Natural killer cell (primary cell): ENCODE measurements at regions of chr11 and their contacts with region 1.

Region 1: DNA sequence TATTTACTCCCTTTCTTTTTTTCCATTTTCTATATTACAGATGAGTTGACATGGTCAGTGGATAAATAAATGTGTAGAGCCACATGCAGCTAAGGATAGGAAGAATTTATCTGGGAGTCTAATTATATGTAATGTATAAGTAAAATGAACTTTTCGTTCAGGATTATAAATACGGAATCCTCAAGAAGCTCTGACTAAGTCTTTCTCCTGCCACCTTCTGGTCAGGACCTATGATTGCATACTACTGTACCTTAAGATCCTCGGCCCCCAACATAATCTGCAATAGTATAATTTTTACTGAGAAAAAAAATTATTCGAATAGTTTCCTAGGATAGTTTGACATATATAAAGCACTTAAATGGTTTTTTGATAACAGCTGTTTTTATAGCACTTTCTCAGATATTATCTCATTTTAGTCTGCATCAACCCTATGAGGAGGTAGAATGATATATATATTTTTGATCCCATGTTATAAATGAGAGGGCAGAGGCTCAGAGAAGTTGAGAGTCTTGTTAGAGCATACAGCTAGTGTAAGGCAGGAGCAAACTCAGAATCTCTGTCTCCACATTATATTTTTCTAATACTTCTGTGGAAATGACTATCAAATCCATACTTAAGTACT is 36.1 kb downstream of the CCDC90B start:
- DNase-seq: peak in 1 of 2 donors; percentile 73
- ATAC-seq: peak; percentile 64 to 91 (median 82)
- H3K4me3 ChIP-seq: no peak overlapping the region
- H3K4me3 Mint-ChIP-seq: no peak overlapping the region
- H3K27ac ChIP-seq: no peak overlapping the region
- H3K27ac Mint-ChIP-seq: no peak overlapping the region
- H3K4me1 ChIP-seq: no peaks in the 10 kb centered on the region
- H3K4me1 Mint-ChIP-seq: no peaks in the 10 kb centered on the region
- H3K27me3 ChIP-seq: no peaks in the 10 kb centered on the region
- H3K27me3 Mint-ChIP-seq: no peaks in the 10 kb centered on the region
- CTCF ChIP-seq: peak; percentile 85

Region 2: DNA sequence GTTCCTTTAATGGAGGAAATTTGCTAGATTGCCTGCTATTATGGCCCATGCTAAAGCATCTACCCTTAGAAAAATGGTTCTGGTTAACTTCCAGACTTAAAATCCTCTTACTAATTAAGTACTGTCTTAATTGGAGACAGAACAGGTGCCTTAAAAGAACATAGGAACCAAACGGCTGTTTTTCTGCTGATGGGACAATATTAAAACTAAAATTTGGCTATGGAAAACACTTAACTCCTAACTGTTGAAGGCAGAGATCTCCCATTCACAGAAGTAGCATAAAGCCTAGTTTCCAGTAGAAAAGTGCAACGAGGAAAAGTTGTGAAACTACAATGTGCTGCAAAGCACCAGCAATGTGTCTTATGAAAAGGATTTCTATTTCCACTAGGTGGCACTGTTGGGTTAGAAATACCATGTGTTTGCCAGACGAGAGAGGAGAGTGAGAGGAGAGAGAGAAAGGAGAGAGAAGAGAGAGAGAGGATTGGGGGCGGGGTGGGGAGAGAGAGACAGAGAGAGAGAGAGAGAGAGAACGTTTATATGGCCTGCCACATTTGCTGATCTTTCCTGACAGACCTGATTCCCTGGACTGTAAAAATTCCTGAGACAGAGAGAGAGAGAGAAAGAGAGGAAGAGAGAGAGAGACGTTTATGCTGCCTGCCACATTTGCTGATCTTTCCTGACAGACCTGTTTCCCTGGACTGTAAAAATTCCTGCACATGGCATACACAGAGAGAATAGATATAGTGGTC is 567.9 kb before region 1 on chr11:
- intact Hi-C with region 1: loop called (anchors 5 kb)
- DNase-seq: peak in 1 of 2 donors; percentile 70
- ATAC-seq: peak in 1 of 3 donors; percentile 66
- H3K4me3 ChIP-seq: no peak overlapping the region
- H3K4me3 Mint-ChIP-seq: peak overlapping the region; percentile 2
- H3K27ac ChIP-seq: no peak overlapping the region
- H3K27ac Mint-ChIP-seq: no peak overlapping the region
- H3K4me1 ChIP-seq: no peaks in the 10 kb centered on the region
- H3K4me1 Mint-ChIP-seq: peaks cover 0 to 6% of the 10 kb centered on the region in 2 donors
- H3K27me3 ChIP-seq: no peaks in the 10 kb centered on the region
- H3K27me3 Mint-ChIP-seq: peaks cover 0 to 9% of the 10 kb centered on the region in 2 donors
- CTCF ChIP-seq: peak; percentile 53

Region 3: GRCh38 chr11:82790723-82791484 is 459.2 kb before region 1 on chr11:
- intact Hi-C with region 1: no loop called
- DNase-seq: no peak
- ATAC-seq: no peak
- H3K4me3 ChIP-seq: no peak overlapping the region
- H3K4me3 Mint-ChIP-seq: no peak overlapping the region
- H3K27ac ChIP-seq: no peak overlapping the region
- H3K27ac Mint-ChIP-seq: no peak overlapping the region
- H3K4me1 ChIP-seq: no peaks in the 10 kb centered on the region
- H3K4me1 Mint-ChIP-seq: no peaks in the 10 kb centered on the region
- H3K27me3 ChIP-seq: no peaks in the 10 kb centered on the region
- H3K27me3 Mint-ChIP-seq: peaks cover 0 to 6% of the 10 kb centered on the region in 2 donors
- CTCF ChIP-seq: no peak

Region 4: GRCh38 chr11:82867495-82868082 is 382.5 kb before region 1 on chr11:
- intact Hi-C with region 1: loop called (anchors 1 kb)
- DNase-seq: peak; percentile 55 to 88
- ATAC-seq: peak; percentile 74 to 77 (median 76)
- H3K4me3 ChIP-seq: no peak overlapping the region
- H3K4me3 Mint-ChIP-seq: peak overlapping the region; percentile 18
- H3K27ac ChIP-seq: no peak overlapping the region
- H3K27ac Mint-ChIP-seq: no peak overlapping the region
- H3K4me1 ChIP-seq: peaks cover 3% of the 10 kb centered on the region
- H3K4me1 Mint-ChIP-seq: peaks cover 8 to 10% of the 10 kb centered on the region in 2 donors
- H3K27me3 ChIP-seq: no peaks in the 10 kb centered on the region
- H3K27me3 Mint-ChIP-seq: no peaks in the 10 kb centered on the region
- CTCF ChIP-seq: peak; percentile 80

Region 5: GRCh38 chr11:82906244-82906654 is 343.8 kb before region 1 on chr11:
- intact Hi-C with region 1: loop called (anchors 1 kb)
- DNase-seq: peak in 1 of 2 donors; percentile 57
- ATAC-seq: no peak
- H3K4me3 ChIP-seq: no peak overlapping the region
- H3K4me3 Mint-ChIP-seq: no peak overlapping the region
- H3K27ac ChIP-seq: no peak overlapping the region
- H3K27ac Mint-ChIP-seq: no peak overlapping the region
- H3K4me1 ChIP-seq: peaks cover 8% of the 10 kb centered on the region
- H3K4me1 Mint-ChIP-seq: peaks cover 15 to 16% of the 10 kb centered on the region in 2 donors
- H3K27me3 ChIP-seq: no peaks in the 10 kb centered on the region
- H3K27me3 Mint-ChIP-seq: no peaks in the 10 kb centered on the region
- CTCF ChIP-seq: peak; percentile 82

Region 6: DNA sequence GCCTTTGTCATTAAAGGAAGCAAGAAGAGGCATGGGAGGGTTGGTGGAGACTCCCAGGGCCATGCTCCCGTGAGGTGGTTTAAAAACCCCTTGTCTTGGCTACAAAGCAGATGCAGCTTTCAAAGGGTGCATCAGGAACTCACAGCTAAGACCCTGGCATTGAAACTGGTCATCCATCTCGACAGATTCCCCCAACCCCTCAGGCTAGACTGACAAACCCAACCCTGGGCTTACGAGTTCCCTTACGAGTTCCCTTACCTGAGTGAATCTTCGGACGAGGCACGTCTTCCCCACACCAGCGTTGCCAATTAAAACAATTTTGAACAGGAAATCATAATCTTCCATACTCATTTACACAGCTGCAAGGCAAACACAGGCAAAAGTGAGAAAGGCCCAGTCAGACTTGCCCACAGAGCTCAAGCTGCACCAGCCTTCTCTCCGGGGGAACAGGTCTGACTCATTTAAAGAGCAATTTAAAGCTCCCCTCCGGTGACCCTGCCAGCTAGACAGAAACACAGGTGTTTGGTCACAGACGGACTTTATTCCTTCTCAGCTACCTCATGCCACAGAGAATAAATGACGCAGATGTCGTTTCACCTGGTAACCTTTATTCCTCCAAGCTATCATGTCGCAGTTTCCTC is 253.0 kb before region 1 on chr11:
- intact Hi-C with region 1: no loop called
- DNase-seq: no peak
- ATAC-seq: no peak
- H3K4me3 ChIP-seq: no peak overlapping the region
- H3K4me3 Mint-ChIP-seq: no peak overlapping the region
- H3K27ac ChIP-seq: no peak overlapping the region
- H3K27ac Mint-ChIP-seq: no peak overlapping the region
- H3K4me1 ChIP-seq: no peaks in the 10 kb centered on the region
- H3K4me1 Mint-ChIP-seq: peaks cover 11 to 16% of the 10 kb centered on the region in 2 donors
- H3K27me3 ChIP-seq: no peaks in the 10 kb centered on the region
- H3K27me3 Mint-ChIP-seq: no peaks in the 10 kb centered on the region
- CTCF ChIP-seq: no peak

Region 7: DNA sequence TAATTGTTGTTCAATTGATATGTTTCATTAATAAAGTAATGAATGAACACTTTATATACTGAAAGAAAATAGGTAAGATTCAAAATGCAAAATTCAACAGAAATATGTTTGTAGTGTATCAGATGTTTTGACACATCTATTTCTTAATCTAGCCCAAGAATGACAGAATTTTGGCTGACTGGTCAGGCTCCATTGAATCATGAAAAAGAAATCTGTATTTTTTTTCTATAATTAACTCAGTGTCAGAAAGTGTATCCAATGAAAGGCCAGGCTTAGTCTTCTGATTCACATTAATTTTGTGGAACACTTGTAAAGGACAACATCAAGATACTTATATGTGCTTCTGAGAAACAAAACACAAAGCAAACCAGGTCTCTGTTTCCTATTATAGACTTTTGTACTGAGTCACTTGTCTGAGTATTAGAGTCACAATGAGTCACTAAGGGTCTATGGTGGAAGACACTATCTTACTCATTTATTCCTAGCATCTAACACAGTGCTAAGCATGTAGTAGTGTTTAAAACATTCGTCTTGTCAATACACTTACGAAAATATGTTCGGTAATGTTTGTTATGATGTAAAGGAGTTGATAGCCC is 333.8 kb after region 1 on chr11:
- intact Hi-C with region 1: no loop called
- DNase-seq: no peak
- ATAC-seq: no peak
- H3K4me3 ChIP-seq: no peak overlapping the region
- H3K4me3 Mint-ChIP-seq: no peak overlapping the region
- H3K27ac ChIP-seq: no peak overlapping the region
- H3K27ac Mint-ChIP-seq: no peak overlapping the region
- H3K4me1 ChIP-seq: no peaks in the 10 kb centered on the region
- H3K4me1 Mint-ChIP-seq: no peaks in the 10 kb centered on the region
- H3K27me3 ChIP-seq: no peaks in the 10 kb centered on the region
- H3K27me3 Mint-ChIP-seq: no peaks in the 10 kb centered on the region
- CTCF ChIP-seq: no peak

Region 8: DNA sequence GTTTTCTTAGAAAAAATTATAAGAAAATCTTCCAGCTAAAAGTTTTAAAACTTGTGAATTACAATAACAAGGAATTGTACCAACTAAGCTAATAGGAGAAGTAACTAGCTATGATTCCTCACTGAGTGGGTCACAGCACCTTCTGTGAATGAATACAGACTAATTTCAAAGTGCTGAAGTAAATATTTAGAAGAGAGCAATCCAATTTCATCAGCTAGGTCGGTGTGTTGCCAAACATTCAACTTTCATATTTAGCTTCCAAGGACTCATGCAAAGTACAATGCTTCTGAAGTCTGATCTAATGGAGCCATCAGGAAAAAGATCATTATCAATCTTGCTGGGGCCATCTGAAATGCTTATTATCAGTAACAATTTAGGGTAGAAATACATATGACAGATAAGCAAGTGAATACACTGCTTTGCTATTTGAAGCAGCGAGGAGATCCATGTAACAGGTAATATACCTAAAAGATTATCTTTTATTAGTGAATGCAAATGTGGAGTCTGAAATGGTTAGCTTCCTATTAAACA is 786.6 kb after region 1 on chr11:
- intact Hi-C with region 1: no loop called
- DNase-seq: no peak
- ATAC-seq: no peak
- H3K4me3 ChIP-seq: no peak overlapping the region
- H3K4me3 Mint-ChIP-seq: no peak overlapping the region
- H3K27ac ChIP-seq: no peak overlapping the region
- H3K27ac Mint-ChIP-seq: no peak overlapping the region
- H3K4me1 ChIP-seq: no peaks in the 10 kb centered on the region
- H3K4me1 Mint-ChIP-seq: no peaks in the 10 kb centered on the region
- H3K27me3 ChIP-seq: no peaks in the 10 kb centered on the region
- H3K27me3 Mint-ChIP-seq: no peaks in the 10 kb centered on the region
- CTCF ChIP-seq: no peak